Breast epithelium (tissue), 4 donors: ENCODE measurements at regions of chr15 and their contacts with region 1.

Region 1: GRCh38 chr15:72970933-72971770 is 81.1 kb upstream of the NEO1 start:
- DNase-seq: no peak
- H3K4me3 ChIP-seq: peak overlapping the region; percentile 23 to 60 (median 30)
- H3K27ac ChIP-seq: peak overlapping the region; percentile 46 to 77
- H3K4me1 ChIP-seq: no peaks in the 10 kb centered on the region
- H3K27me3 ChIP-seq: no peaks in the 10 kb centered on the region
- CTCF ChIP-seq: no peak
- POLR2A ChIP-seq: no peak

Region 2: GRCh38 chr15:72982714-72983113 is 11.6 kb after region 1 on chr15:
- intact Hi-C with region 1: no loop called
- DNase-seq: peak in 1 of 2 donors; percentile 31
- H3K4me3 ChIP-seq: no peak overlapping the region
- H3K27ac ChIP-seq: peak overlapping the region; percentile 15 to 51
- H3K4me1 ChIP-seq: no peaks in the 10 kb centered on the region
- H3K27me3 ChIP-seq: no peaks in the 10 kb centered on the region
- CTCF ChIP-seq: no peak
- POLR2A ChIP-seq: no peak

Region 3: DNA sequence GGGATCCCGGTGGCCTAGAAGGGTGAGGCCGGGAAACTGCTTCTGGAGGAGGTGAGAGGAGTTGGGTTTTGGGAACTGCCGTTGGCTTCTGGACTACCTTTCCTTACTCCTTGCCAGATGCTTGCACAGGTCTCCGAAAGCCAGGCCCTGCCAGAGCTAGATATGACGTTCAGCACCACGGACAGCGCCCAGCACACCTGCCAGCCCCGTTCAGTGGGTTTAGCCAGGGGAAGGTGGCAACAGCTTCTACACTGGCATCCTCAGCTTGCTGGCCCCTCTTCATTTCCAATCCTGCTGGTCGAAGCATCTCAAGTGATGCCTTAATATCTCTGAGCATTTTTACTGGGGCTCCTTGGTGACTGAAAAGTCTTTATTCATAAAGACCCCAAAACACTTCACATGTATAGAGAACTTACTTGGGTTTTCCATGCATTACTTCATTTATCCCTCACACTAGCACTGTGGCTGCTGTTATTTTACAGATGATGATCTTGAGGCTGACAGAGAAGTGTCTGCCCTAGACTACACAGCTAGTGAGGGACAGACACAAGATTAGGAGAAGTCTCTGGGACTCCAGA is 375.7 kb after region 1 on chr15:
- intact Hi-C with region 1: loop called (anchors 5 kb)
- DNase-seq: peak in 1 of 2 donors; percentile 70
- H3K4me3 ChIP-seq: no peak overlapping the region
- H3K27ac ChIP-seq: no peak overlapping the region
- H3K4me1 ChIP-seq: no peaks in the 10 kb centered on the region
- H3K27me3 ChIP-seq: peaks cover 0 to 6% of the 10 kb centered on the region in 2 donors
- CTCF ChIP-seq: no peak
- POLR2A ChIP-seq: no peak

Region 4: DNA sequence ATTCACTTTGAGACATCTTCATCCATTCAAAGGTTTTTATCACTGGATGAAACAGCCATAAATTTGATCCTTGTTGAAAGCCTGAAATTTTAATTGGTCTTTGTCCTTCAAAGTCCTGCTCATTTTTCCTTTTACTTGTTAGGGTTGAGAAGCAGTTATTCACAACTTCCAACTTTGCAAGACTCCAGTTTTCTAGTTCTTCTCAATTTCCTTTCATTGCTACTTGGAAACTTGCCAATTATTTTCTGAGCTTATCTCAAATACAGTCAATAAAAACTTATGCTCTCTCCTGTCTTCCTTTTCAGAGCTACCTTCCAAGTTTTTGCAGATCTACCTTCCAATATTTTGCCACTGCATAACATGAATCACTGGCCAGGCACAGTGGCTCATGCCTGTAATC is 689.3 kb after region 1 on chr15:
- intact Hi-C with region 1: no loop called
- DNase-seq: no peak
- H3K4me3 ChIP-seq: no peak overlapping the region
- H3K27ac ChIP-seq: no peak overlapping the region
- H3K4me1 ChIP-seq: no peaks in the 10 kb centered on the region
- H3K27me3 ChIP-seq: no peaks in the 10 kb centered on the region
- CTCF ChIP-seq: no peak
- POLR2A ChIP-seq: no peak